Calu3 (cell line): ENCODE measurements at regions of chr22 and their contacts with region 1.

Region 1: DNA sequence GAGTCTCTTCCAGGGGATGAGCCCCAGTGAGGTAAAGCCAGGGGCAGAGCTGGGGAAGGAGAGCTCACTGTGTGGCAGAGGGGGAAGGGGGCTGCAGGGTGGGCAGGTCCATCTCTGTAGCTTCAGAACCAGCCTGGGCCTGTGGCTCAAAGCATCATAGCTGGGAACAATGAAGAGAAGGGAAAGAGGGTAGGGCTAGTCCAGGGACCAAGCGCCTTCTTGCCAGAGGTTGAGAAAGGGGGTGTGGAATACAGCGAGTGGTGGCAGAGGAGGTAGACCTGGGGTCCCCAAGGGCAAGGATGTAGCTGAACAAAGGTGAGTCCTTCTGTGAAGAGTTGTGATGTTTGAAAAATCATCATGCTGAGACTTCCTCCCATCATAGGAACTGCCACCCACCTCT is 1.2 kb upstream of the PLA2G3 start:
- DNase-seq: no peak
- H3K4me3 Mint-ChIP-seq: no peak overlapping the region
- H3K27ac Mint-ChIP-seq: no peak overlapping the region
- H3K4me1 Mint-ChIP-seq: no peaks in the 10 kb centered on the region
- H3K27me3 Mint-ChIP-seq: peaks cover 75% of the 10 kb centered on the region
- CTCF ChIP-seq: no peak

Region 2: GRCh38 chr22:31160328-31160978 is 18.9 kb after region 1 on chr22:
- CTCF ChIA-PET with region 1: interaction called, 14 read pairs
- intact Hi-C with region 1: no loop called
- DNase-seq: no peak
- H3K4me3 Mint-ChIP-seq: peak overlapping the region; percentile 83
- H3K27ac Mint-ChIP-seq: peak overlapping the region; percentile 83
- H3K4me1 Mint-ChIP-seq: peaks cover 20% of the 10 kb centered on the region
- H3K27me3 Mint-ChIP-seq: peaks cover 9% of the 10 kb centered on the region
- CTCF ChIP-seq: no peak